ENCODE measurements at regions of chr7 and their contacts with region 1.

Region 1: DNA sequence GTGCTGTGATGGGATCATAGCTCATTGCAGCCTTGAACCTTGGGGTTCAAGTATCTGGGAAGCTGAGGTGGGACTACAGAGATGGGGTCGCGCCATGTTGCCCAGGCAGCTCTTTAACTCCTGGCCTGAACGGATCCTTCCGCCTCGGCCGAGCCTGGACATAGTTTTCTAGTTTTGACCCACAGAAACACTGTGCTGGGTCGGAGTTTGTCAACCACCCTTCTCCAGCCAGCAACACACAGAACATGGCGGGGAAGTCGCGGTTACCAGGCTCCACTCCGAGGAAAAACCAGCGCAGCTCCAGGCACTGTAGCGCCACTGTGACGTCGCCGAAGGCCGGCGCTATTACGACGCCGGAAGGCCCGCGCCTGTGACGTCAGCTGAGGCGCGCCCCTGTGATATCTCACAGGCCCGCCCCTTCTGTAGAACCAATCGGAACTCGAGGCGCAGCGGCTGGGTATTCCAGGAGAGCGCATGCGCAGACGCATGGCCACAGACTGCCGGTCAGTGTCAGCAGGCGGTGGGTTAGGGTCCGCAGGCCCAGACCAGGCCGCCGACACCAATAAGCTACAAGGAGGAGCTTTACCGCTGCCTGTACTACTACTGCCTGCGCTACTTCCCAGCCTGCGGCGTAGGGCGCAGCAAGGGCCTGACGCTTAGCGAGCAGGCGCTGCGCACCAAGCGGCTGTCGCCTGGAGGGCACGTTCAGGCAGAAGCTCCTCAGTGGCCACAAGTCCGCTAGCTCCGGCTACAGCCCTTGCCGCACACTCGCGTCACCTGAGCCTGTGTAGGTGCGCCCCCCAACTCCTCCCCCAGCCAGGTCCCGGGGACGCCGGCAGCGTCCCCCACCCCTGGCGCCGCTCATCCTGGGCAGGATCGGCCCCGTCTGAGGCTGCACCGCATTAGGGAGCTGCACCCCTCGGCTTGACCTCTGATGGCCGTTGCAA is 135.2 kb upstream of the KCTD7 start:
- DNase-seq: peak; percentile 99
- ATAC-seq: peak; percentile 91
- H3K4me3 ChIP-seq: peak overlapping the region; percentile 75 to 92 (median 85)
- H3K4me3 Mint-ChIP-seq: peak overlapping the region; percentile 94
- H3K27ac ChIP-seq: peak overlapping the region; percentile 92 to 97
- H3K27ac Mint-ChIP-seq: peak overlapping the region; percentile 97
- H3K4me1 ChIP-seq: peaks cover 6 to 13% of the 10 kb centered on the region in 2 donors
- H3K4me1 Mint-ChIP-seq: peaks cover 26% of the 10 kb centered on the region
- H3K27me3 ChIP-seq: no peaks in the 10 kb centered on the region
- H3K27me3 Mint-ChIP-seq: no peaks in the 10 kb centered on the region
- CTCF ChIP-seq: no peak

Region 2: GRCh38 chr7:65750511-65751344 is 742.8 kb before region 1 on chr7:
- CTCF ChIA-PET with region 1: no interaction called
- POLR2A ChIA-PET with region 1: no interaction called
- intact Hi-C with region 1: loop called (anchors 2 kb)
- DNase-seq: peak; percentile 89
- ATAC-seq: peak; percentile 99
- H3K4me3 ChIP-seq: peak overlapping the region; percentile 43 to 88 (median 75)
- H3K4me3 Mint-ChIP-seq: peak overlapping the region; percentile 97
- H3K27ac ChIP-seq: peak overlapping the region; percentile 41 to 69
- H3K27ac Mint-ChIP-seq: peak overlapping the region; percentile 86
- H3K4me1 ChIP-seq: peaks cover 3 to 15% of the 10 kb centered on the region in 2 donors
- H3K4me1 Mint-ChIP-seq: peaks cover 16% of the 10 kb centered on the region
- H3K27me3 ChIP-seq: no peaks in the 10 kb centered on the region
- H3K27me3 Mint-ChIP-seq: no peaks in the 10 kb centered on the region
- CTCF ChIP-seq: no peak

Region 3: DNA sequence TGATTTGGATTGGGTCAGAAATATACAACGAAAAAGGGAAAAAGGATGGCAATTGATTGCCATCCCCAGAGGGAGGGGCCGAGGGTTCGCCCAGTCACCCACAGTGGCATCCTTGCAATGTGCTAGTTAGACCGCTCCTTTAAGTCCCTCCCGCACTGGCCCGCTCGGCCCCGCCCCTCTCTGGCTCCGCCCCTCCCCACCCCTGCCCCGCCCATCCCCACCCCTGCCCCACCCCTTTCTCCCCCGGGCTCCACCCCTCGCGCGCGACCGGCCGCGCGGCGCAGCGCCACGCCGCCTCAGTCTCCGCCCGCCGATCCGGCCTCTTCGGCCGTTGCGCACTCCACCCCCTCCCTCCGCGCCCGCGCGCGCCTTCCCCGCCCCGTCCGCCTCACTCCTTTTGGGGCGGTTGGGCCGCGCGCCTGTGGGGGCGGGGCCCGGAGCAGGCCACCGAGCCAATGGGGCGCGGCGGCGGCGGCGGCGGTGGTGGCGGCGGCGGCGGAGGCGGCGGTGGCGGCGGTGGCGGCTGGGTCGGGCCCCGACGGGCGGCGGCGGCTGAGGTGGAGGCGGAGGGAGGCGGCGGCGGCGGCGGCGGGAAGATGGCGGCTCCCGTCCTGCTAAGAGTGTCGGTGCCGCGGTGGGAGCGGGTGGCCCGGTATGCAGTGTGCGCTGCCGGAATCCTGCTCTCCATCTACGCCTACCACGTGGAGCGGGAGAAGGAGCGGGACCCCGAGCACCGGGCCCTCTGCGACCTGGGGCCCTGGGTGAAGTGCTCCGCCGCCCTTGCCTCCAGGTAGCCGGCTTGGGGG is 620.5 kb before region 1 on chr7 and contains the start of gene VKORC1L1:
- CTCF ChIA-PET with region 1: no interaction called
- POLR2A ChIA-PET with region 1: no interaction called
- intact Hi-C with region 1: no loop called
- DNase-seq: peak; percentile 96
- ATAC-seq: peak; percentile 93
- H3K4me3 ChIP-seq: peak within 1 kb of the TSS in 4 of 5 experiments; percentile 68 to 78 (median 68)
- H3K4me3 Mint-ChIP-seq: peak within 1 kb of the TSS; percentile 87
- H3K27ac ChIP-seq: peak within 1 kb of the TSS; percentile 54 to 71
- H3K27ac Mint-ChIP-seq: peak within 1 kb of the TSS; percentile 68
- H3K4me1 ChIP-seq: peaks cover 5 to 9% of the 10 kb centered on the region in 2 donors
- H3K4me1 Mint-ChIP-seq: peaks cover 8% of the 10 kb centered on the region
- H3K27me3 ChIP-seq: no peaks in the 10 kb centered on the region
- H3K27me3 Mint-ChIP-seq: no peaks in the 10 kb centered on the region
- CTCF ChIP-seq: no peak
- total RNA-seq, gene VKORC1L1: 8.1 and 10.1 TPM in 2 replicates

Region 4: DNA sequence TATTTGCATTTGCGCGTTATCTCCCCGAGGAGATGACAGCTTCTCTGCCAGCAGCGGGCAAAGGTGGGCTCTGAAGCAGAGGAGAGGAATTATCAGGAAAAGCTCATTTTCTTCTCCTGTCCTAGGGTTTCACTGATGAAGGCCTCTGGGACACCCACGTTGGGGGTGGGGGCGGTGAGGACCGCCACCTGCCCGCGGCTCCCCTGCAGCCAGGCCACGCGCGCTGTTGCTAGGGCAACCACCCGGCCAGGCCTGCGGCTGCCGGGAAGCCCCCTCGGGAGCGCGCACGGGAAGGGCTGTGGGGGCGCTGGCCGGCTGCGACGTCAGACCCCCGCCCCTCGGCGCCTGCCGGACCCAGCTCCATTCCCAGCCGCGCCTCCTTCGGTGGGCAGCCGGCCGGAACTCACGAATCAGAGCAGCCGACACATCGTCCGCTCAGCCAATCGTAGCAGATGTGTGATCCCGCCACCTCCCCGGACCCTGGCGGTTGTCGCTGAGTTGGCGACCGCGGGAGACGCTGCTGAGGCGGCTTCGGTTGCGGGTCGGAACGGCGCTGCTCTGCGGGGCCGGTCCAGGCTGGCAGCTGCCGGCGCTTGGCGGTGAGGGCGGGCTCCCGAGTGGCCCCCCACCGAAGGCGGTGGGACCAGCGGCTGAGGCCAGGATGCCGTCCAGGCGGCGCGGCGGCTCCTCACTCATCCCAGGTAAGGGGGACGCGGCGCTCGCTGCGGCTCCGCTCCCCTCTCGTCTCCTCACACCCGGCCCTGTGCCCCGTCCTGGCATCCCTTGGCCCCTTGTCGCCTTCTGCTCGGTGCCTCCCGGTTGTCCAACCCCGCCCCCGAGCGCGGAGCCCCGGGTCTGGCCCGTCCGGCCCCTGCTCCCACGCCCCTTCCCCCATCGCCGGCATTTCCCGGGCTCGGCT is 288.4 kb before region 1 on chr7 and contains the start of gene TPST1:
- CTCF ChIA-PET with region 1: no interaction called
- POLR2A ChIA-PET with region 1: interaction called, 4 read pairs
- intact Hi-C with region 1: loop called (anchors 1 kb)
- DNase-seq: peak; percentile 97
- ATAC-seq: peak; percentile 95
- H3K4me3 ChIP-seq: peak within 1 kb of the TSS; percentile 66 to 87 (median 75)
- H3K4me3 Mint-ChIP-seq: peak within 1 kb of the TSS; percentile 96
- H3K27ac ChIP-seq: peak within 1 kb of the TSS; percentile 68 to 84
- H3K27ac Mint-ChIP-seq: peak within 1 kb of the TSS; percentile 92
- H3K4me1 ChIP-seq: peaks cover 40 to 41% of the 10 kb centered on the region in 2 donors
- H3K4me1 Mint-ChIP-seq: peaks cover 41% of the 10 kb centered on the region
- H3K27me3 ChIP-seq: peaks cover 0 to 4% (median 1%) of the 10 kb centered on the region in 4 experiments
- H3K27me3 Mint-ChIP-seq: no peaks in the 10 kb centered on the region
- CTCF ChIP-seq: peak; percentile 75
- total RNA-seq, gene TPST1: 11.3 and 13.0 TPM in 2 replicates

Region 5: GRCh38 chr7:66505531-66506451 is 12.3 kb after region 1 on chr7:
- CTCF ChIA-PET with region 1: no interaction called
- POLR2A ChIA-PET with region 1: no interaction called
- intact Hi-C with region 1: no loop called
- DNase-seq: peak; percentile 24
- ATAC-seq: no peak
- H3K4me3 ChIP-seq: peak overlapping the region in 2 of 5 experiments; percentile 25 to 33
- H3K4me3 Mint-ChIP-seq: peak overlapping the region; percentile 62
- H3K27ac ChIP-seq: no peak overlapping the region
- H3K27ac Mint-ChIP-seq: no peak overlapping the region
- H3K4me1 ChIP-seq: peaks cover 0 to 2% of the 10 kb centered on the region in 2 donors
- H3K4me1 Mint-ChIP-seq: peaks cover 2% of the 10 kb centered on the region
- H3K27me3 ChIP-seq: peaks cover 0 to 26% (median 11%) of the 10 kb centered on the region in 4 experiments
- H3K27me3 Mint-ChIP-seq: peaks cover 25% of the 10 kb centered on the region
- CTCF ChIP-seq: no peak

Region 6: GRCh38 chr7:66591799-66592596 is 98.5 kb after region 1 on chr7:
- CTCF ChIA-PET with region 1: no interaction called
- POLR2A ChIA-PET with region 1: interaction called, 3 read pairs
- intact Hi-C with region 1: loop called (anchors 1 kb)
- DNase-seq: peak; percentile 90
- ATAC-seq: peak; percentile 98
- H3K4me3 ChIP-seq: peak overlapping the region; percentile 47 to 94 (median 81)
- H3K4me3 Mint-ChIP-seq: peak overlapping the region; percentile 100
- H3K27ac ChIP-seq: peak overlapping the region; percentile 42 to 87
- H3K27ac Mint-ChIP-seq: peak overlapping the region; percentile 99
- H3K4me1 ChIP-seq: peaks cover 13 to 27% of the 10 kb centered on the region in 2 donors
- H3K4me1 Mint-ChIP-seq: peaks cover 47% of the 10 kb centered on the region
- H3K27me3 ChIP-seq: no peaks in the 10 kb centered on the region
- H3K27me3 Mint-ChIP-seq: no peaks in the 10 kb centered on the region
- CTCF ChIP-seq: no peak

Region 7: DNA sequence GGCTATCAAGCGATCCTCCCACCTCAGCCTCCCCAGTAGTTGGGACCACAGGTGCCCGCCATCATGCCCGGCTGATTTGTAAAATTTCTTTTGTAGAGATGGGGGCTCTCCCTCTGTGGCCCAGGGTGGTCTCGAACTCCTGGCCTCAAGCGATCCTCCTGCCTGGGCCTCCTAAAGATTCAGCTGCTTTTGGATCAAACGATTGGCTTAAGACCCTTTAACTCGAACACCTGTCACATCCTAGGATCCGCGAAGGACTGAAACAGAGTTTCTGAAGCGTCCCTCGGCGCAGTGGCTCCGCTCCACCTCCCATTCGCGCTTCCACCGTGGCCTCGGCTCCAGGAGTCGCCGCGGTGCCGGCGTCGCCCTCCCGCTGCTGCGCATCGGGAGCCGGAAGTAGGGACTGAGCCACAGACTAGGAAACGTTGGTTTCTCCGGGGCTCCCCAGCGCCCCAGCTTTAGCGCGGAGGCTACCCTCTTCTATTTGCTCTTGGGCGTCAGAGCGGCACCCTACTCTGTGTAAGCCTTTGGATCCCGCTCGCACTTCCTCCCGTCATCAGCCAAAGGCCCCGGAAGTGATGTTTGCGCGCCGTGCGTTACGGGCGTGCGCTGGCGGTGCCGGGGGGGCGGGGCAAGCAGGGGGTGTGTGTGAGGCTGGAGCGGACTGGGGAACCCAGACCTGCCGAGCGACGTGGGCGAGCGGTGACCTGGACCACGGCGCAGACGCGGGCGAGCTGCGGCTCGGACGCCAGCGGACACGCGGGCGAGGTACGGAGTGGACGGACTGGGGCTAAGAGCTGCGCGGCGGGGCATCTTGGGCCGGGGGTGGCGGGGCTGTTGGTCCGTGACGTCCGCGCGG is 188.2 kb after region 1 on chr7:
- CTCF ChIA-PET with region 1: no interaction called
- POLR2A ChIA-PET with region 1: no interaction called
- intact Hi-C with region 1: loop called (anchors 2 kb)
- DNase-seq: peak; percentile 97
- ATAC-seq: peak; percentile 95
- H3K4me3 ChIP-seq: peak overlapping the region; percentile 62 to 99 (median 82)
- H3K4me3 Mint-ChIP-seq: peak overlapping the region; percentile 96
- H3K27ac ChIP-seq: peak overlapping the region; percentile 95 to 99
- H3K27ac Mint-ChIP-seq: peak overlapping the region; percentile 97
- H3K4me1 ChIP-seq: peaks cover 21 to 39% of the 10 kb centered on the region in 2 donors
- H3K4me1 Mint-ChIP-seq: peaks cover 35% of the 10 kb centered on the region
- H3K27me3 ChIP-seq: no peaks in the 10 kb centered on the region
- H3K27me3 Mint-ChIP-seq: no peaks in the 10 kb centered on the region
- CTCF ChIP-seq: no peak

Region 8: GRCh38 chr7:67302113-67303039 is 808.9 kb after region 1 on chr7:
- CTCF ChIA-PET with region 1: no interaction called
- POLR2A ChIA-PET with region 1: no interaction called
- intact Hi-C with region 1: loop called (anchors 10 kb)
- DNase-seq: peak; percentile 99
- ATAC-seq: peak; percentile 87
- H3K4me3 ChIP-seq: peak overlapping the region; percentile 54 to 96 (median 76)
- H3K4me3 Mint-ChIP-seq: peak overlapping the region; percentile 92
- H3K27ac ChIP-seq: peak overlapping the region; percentile 86 to 89
- H3K27ac Mint-ChIP-seq: peak overlapping the region; percentile 93
- H3K4me1 ChIP-seq: peaks cover 2 to 11% of the 10 kb centered on the region in 2 donors
- H3K4me1 Mint-ChIP-seq: peaks cover 33% of the 10 kb centered on the region
- H3K27me3 ChIP-seq: no peaks in the 10 kb centered on the region
- H3K27me3 Mint-ChIP-seq: no peaks in the 10 kb centered on the region
- CTCF ChIP-seq: peak; percentile 27